ENCODE measurements at regions of chr1 and their contacts with region 1.

Region 1: DNA sequence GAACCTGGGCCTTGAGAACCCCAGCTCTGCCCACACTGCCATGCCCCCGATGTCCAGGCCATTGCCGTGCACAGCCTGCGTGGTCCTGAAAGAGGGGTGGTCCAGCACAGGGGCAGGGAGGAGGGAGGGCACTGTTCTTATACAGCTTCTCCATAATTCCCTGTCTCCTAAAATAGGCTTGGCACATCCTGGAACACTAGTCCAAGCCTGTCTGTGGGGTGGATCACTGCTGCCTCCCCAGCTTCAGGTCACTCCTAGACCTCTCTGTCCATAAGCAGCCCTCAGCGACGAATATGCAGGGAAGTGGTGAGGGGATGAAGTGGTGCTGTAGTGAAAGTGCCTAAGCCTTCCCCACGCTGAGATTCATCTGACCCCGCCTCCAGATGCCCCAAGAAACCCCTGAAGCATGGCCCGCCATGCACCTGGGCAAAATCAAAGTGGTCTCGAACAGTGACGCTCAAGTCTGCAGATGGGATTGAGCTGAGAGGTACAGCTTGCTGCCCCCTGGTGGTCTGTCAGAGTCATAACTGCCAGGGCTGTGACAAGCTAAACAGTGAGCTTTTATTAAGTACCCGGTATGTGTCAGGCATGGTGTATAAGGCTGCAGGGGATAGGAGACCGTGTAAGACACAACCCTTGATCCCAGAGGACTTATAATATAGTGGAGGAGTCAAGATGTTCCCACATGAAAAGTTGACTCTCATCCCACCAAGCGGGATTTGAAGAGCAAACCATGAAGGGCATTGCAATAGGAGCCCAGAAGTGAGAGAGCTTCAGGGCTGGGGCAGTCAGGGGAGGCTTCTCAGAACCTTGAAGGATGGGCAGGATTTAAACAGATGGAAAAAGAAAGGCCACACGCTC is 66.6 kb downstream of the FAM163A start:
- DNase-seq: peak; percentile 80
- H3K4me3 Mint-ChIP-seq: no peak overlapping the region
- H3K27ac Mint-ChIP-seq: no peak overlapping the region
- H3K4me1 Mint-ChIP-seq: peaks cover 7% of the 10 kb centered on the region
- H3K27me3 Mint-ChIP-seq: peaks cover 41% of the 10 kb centered on the region

Region 2: DNA sequence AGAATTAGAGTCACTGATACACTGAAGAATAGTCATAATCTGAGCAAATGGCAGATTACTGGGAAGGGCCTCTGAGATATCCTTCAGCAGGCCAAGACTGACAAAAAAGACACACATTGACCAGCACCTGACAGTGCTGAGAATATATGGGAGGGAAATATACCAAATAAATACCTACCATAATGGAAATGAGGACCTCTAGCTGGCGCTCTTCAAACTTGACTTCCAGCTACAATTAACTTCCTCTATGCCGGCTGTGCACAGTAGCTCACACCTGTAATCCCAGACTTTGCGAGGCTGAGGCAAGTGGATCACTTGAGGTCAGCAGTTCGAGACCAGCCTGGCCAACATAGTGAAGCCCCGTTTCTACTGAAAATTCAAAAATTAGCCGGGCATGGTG is 303.5 kb before region 1 on chr1:
- CTCF ChIA-PET with region 1: no interaction called
- DNase-seq: no peak
- H3K4me3 Mint-ChIP-seq: no peak overlapping the region
- H3K27ac Mint-ChIP-seq: no peak overlapping the region
- H3K4me1 Mint-ChIP-seq: peaks cover 8% of the 10 kb centered on the region
- H3K27me3 Mint-ChIP-seq: no peaks in the 10 kb centered on the region

Region 3: DNA sequence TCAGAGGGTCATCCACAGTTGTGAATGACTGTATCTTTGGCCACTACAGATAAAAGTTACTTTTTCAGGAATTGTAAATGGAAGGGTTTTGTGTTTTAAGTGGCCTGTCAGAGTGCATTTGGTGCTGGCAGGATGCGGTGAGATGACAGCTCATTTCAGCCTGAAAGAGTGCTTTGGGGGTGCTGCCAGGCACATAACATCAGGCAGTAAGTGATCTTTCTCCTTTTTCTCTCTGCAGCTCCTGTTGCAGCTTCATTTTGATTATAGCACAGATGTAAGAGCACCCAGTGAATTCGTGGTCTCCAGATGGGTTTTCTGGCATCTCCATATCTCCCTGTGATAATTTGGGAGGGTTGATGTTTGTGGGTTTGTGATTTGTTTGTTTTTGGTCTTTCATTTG is 81.5 kb before region 1 on chr1:
- CTCF ChIA-PET with region 1: interaction called, 14 read pairs
- DNase-seq: no peak
- H3K4me3 Mint-ChIP-seq: no peak overlapping the region
- H3K27ac Mint-ChIP-seq: no peak overlapping the region
- H3K4me1 Mint-ChIP-seq: no peaks in the 10 kb centered on the region
- H3K27me3 Mint-ChIP-seq: peaks cover 7% of the 10 kb centered on the region

Region 4: DNA sequence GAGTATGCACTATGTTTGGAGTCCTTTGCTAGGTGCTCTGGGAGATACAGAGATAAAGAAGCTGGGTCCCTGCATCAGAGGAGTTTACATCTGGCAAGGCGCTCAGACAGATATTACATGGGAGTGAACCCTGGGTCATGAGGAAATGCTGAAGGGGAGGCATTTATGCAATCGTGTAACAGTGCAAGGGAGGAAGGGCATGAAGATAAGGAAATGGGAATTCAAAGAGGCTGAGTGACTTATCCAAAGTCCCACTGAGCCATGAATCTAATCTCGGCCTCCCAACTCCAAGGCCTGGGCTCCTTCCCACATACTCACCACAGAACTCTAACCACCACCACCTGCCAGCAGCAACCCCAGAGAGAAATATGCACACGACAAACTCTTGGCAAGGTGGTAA is 15.1 kb before region 1 on chr1:
- CTCF ChIA-PET with region 1: interaction called, 19 read pairs
- DNase-seq: no peak
- H3K4me3 Mint-ChIP-seq: no peak overlapping the region
- H3K27ac Mint-ChIP-seq: no peak overlapping the region
- H3K4me1 Mint-ChIP-seq: no peaks in the 10 kb centered on the region
- H3K27me3 Mint-ChIP-seq: peaks cover 16% of the 10 kb centered on the region

Region 5: GRCh38 chr1:179831852-179832699 is 22.3 kb after region 1 on chr1:
- CTCF ChIA-PET with region 1: interaction called, 23 read pairs
- DNase-seq: peak; percentile 55
- H3K4me3 Mint-ChIP-seq: peak overlapping the region; percentile 25
- H3K27ac Mint-ChIP-seq: peak overlapping the region; percentile 93
- H3K4me1 Mint-ChIP-seq: peaks cover 33% of the 10 kb centered on the region
- H3K27me3 Mint-ChIP-seq: peaks cover 12% of the 10 kb centered on the region